ENCODE measurements at regions of chr5 and their contacts with region 1.

Region 1: DNA sequence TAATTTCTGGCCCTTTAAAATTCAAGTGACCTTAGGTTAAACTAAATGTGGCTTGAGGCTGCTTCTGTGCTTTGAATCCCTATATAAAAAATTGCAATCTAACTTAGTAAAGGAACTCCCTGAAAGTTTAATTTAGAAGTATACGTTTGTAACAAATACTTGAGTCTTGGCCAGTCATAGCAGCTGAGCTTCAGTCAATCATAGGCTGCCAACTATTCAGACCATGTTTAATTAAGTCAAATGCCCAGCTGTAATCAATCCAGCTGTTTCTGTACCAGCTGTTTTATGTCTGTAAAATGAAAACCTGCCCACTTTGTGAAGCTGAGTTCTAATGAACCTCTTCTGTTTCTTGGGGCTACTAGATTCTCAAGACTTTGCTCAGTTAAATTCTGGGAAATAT is 760.1 kb downstream of the MAT2B start:
- DNase-seq: no peak
- ATAC-seq: no peak

Region 2: DNA sequence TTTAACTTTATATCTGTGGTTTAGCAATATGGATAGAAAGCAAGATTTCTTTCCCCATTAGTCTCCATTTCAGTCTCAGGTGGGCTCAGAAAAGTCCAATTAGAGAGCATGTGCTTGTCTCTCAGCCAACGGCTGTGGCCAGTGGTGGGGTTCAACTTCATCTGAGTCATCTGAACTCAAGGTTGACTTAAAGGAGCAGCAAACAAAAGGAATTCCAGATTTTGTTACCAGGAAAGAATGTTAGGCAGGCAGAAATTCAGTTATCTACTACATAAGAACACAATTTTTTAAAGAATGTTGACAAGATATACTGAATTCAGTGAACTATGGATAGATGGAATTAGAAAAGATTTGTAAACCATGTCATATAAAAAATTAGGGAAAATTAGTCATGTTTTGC is 24.0 kb after region 1 on chr5:
- intact Hi-C with region 1: no loop called
- DNase-seq: no peak
- ATAC-seq: no peak

Region 3: DNA sequence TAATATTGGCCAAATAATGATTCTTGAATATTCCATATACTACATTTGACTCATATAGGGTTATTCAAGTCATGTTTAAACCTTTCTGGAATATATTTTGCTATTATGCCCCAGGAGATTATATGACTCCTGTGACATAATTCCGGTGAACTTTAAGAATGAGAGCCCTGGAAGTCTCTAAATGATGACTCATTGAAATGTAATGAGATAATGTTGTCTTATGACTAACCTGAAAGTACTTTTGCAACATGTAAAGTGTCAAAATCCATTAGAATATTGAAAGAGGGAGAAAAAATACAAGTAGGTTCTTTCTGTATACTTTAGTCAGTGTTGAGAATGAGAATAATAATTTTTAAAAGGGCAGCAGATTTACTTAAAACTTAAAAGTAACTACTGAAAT is 70.3 kb after region 1 on chr5:
- intact Hi-C with region 1: loop called (anchors 2 kb)
- DNase-seq: no peak
- ATAC-seq: no peak

Region 4: GRCh38 chr5:164346785-164347630 is 81.4 kb after region 1 on chr5:
- intact Hi-C with region 1: no loop called
- DNase-seq: no peak
- ATAC-seq: no peak